ENCODE measurements at regions of chr17 and their contacts with region 1.

Region 1: GRCh38 chr17:29777663-29778062 is 152.4 kb downstream of the SSH2 start:
- DNase-seq: no peak
- ATAC-seq: no peak
- H3K4me3 ChIP-seq: no peak overlapping the region
- H3K4me3 Mint-ChIP-seq: no peak overlapping the region
- H3K27ac ChIP-seq: no peak overlapping the region
- H3K27ac Mint-ChIP-seq: no peak overlapping the region
- H3K4me1 ChIP-seq: peaks cover 9 to 10% of the 10 kb centered on the region in 2 donors
- H3K4me1 Mint-ChIP-seq: peaks cover 12% of the 10 kb centered on the region
- H3K27me3 ChIP-seq: no peaks in the 10 kb centered on the region
- H3K27me3 Mint-ChIP-seq: no peaks in the 10 kb centered on the region
- CTCF ChIP-seq: no peak

Region 2: GRCh38 chr17:29617125-29617480 is 160.6 kb before region 1 on chr17:
- CTCF ChIA-PET with region 1: interaction called, 72 read pairs
- POLR2A ChIA-PET with region 1: no interaction called
- intact Hi-C with region 1: no loop called
- DNase-seq: peak; percentile 90
- ATAC-seq: peak; percentile 71
- H3K4me3 ChIP-seq: peak overlapping the region in 4 of 5 experiments; percentile 37 to 73 (median 53)
- H3K4me3 Mint-ChIP-seq: peak overlapping the region; percentile 90
- H3K27ac ChIP-seq: no peak overlapping the region
- H3K27ac Mint-ChIP-seq: peak overlapping the region; percentile 64
- H3K4me1 ChIP-seq: peaks cover 56 to 61% of the 10 kb centered on the region in 2 donors
- H3K4me1 Mint-ChIP-seq: peaks cover 47% of the 10 kb centered on the region
- H3K27me3 ChIP-seq: peaks cover 0 to 40% (median 12%) of the 10 kb centered on the region in 4 experiments
- H3K27me3 Mint-ChIP-seq: peaks cover 5% of the 10 kb centered on the region
- CTCF ChIP-seq: peak; percentile 76

Region 3: GRCh38 chr17:29674281-29674680 is 103.4 kb before region 1 on chr17:
- CTCF ChIA-PET with region 1: interaction called, 15 read pairs
- POLR2A ChIA-PET with region 1: no interaction called
- intact Hi-C with region 1: no loop called
- DNase-seq: no peak
- ATAC-seq: no peak
- H3K4me3 ChIP-seq: no peak overlapping the region
- H3K4me3 Mint-ChIP-seq: no peak overlapping the region
- H3K27ac ChIP-seq: peak overlapping the region in 1 of 2 donors; percentile 43
- H3K27ac Mint-ChIP-seq: peak overlapping the region; percentile 72
- H3K4me1 ChIP-seq: peaks cover 7 to 11% of the 10 kb centered on the region in 2 donors
- H3K4me1 Mint-ChIP-seq: peaks cover 30% of the 10 kb centered on the region
- H3K27me3 ChIP-seq: no peaks in the 10 kb centered on the region
- H3K27me3 Mint-ChIP-seq: no peaks in the 10 kb centered on the region
- CTCF ChIP-seq: no peak

Region 4: GRCh38 chr17:29699283-29699682 is 78.4 kb before region 1 on chr17:
- CTCF ChIA-PET with region 1: interaction called, 18 read pairs
- POLR2A ChIA-PET with region 1: interaction called, 6 read pairs
- intact Hi-C with region 1: no loop called
- DNase-seq: no peak
- ATAC-seq: no peak
- H3K4me3 ChIP-seq: no peak overlapping the region
- H3K4me3 Mint-ChIP-seq: no peak overlapping the region
- H3K27ac ChIP-seq: peak overlapping the region in 1 of 2 donors; percentile 60
- H3K27ac Mint-ChIP-seq: peak overlapping the region; percentile 75
- H3K4me1 ChIP-seq: peaks cover 20% of the 10 kb centered on the region in 2 donors
- H3K4me1 Mint-ChIP-seq: peaks cover 34% of the 10 kb centered on the region
- H3K27me3 ChIP-seq: no peaks in the 10 kb centered on the region
- H3K27me3 Mint-ChIP-seq: no peaks in the 10 kb centered on the region
- CTCF ChIP-seq: no peak

Region 5: GRCh38 chr17:29722411-29723198 is 55.1 kb before region 1 on chr17:
- CTCF ChIA-PET with region 1: interaction called, 17 read pairs
- POLR2A ChIA-PET with region 1: interaction called, 12 read pairs
- intact Hi-C with region 1: loop called (anchors 5 kb)
- DNase-seq: peak; percentile 93
- ATAC-seq: peak; percentile 83
- H3K4me3 ChIP-seq: peak overlapping the region in 4 of 5 experiments; percentile 31 to 44 (median 37)
- H3K4me3 Mint-ChIP-seq: peak overlapping the region; percentile 78
- H3K27ac ChIP-seq: peak overlapping the region; percentile 81 to 94
- H3K27ac Mint-ChIP-seq: peak overlapping the region; percentile 91
- H3K4me1 ChIP-seq: peaks cover 91% of the 10 kb centered on the region in 2 donors
- H3K4me1 Mint-ChIP-seq: peaks cover 85% of the 10 kb centered on the region
- H3K27me3 ChIP-seq: no peaks in the 10 kb centered on the region
- H3K27me3 Mint-ChIP-seq: no peaks in the 10 kb centered on the region
- CTCF ChIP-seq: no peak

Measured in B cell (primary cell).